ENCODE measurements at regions of chr22 and their contacts with region 1.

Region 1: DNA sequence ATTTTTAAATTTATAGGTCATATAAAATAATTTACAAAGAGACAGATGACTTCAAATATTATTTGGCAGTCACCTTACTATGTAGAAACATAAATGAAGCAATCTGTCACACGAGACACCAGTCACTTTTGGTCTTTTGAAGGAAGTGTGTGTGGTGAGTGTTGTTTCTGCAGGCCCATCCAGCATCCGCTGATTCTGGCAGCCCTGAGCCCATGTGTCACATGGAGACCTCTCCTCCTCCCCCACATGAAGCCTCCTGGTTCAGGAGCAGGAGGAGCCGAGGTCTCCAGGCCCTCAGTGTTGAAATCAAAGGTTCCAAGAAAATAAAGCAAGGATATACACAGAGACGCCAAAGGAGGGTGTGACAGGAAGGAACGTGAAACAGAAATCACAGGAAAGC is 60.1 kb downstream of the ARFGAP3 start:
- DNase-seq: peak; percentile 19 to 72 (median 62)
- H3K4me3 ChIP-seq: no peak overlapping the region
- H3K27ac ChIP-seq: no peak overlapping the region
- H3K4me1 ChIP-seq: peaks cover 0 to 14% (median 9%) of the 10 kb centered on the region in 4 experiments
- H3K27me3 ChIP-seq: no peaks in the 10 kb centered on the region

Region 2: GRCh38 chr22:42697542-42698013 is 99.4 kb before region 1 on chr22:
- CTCF ChIA-PET with region 1: no interaction called
- POLR2A ChIA-PET with region 1: no interaction called
- DNase-seq: no peak
- H3K4me3 ChIP-seq: no peak overlapping the region
- H3K27ac ChIP-seq: no peak overlapping the region
- H3K4me1 ChIP-seq: peaks cover 0 to 2% (median 0%) of the 10 kb centered on the region in 4 experiments
- H3K27me3 ChIP-seq: no peaks in the 10 kb centered on the region

Region 3: GRCh38 chr22:42820066-42820763 is 23.2 kb after region 1 on chr22:
- CTCF ChIA-PET with region 1: interaction called, 10 read pairs
- POLR2A ChIA-PET with region 1: no interaction called
- DNase-seq: peak; percentile 10 to 56 (median 15)
- H3K4me3 ChIP-seq: peak overlapping the region in 2 of 7 experiments; percentile 50 to 54
- H3K27ac ChIP-seq: no peak overlapping the region
- H3K4me1 ChIP-seq: peaks cover 0 to 3% (median 0%) of the 10 kb centered on the region in 4 experiments
- H3K27me3 ChIP-seq: no peaks in the 10 kb centered on the region

Region 4: GRCh38 chr22:42881982-42882656 is 85.1 kb after region 1 on chr22:
- CTCF ChIA-PET with region 1: no interaction called
- POLR2A ChIA-PET with region 1: no interaction called
- DNase-seq: no peak
- H3K4me3 ChIP-seq: no peak overlapping the region
- H3K27ac ChIP-seq: no peak overlapping the region
- H3K4me1 ChIP-seq: peaks cover 0 to 2% (median 0%) of the 10 kb centered on the region in 4 experiments
- H3K27me3 ChIP-seq: no peaks in the 10 kb centered on the region